ENCODE measurements at regions of chr1 and their contacts with region 1.

Region 1: DNA sequence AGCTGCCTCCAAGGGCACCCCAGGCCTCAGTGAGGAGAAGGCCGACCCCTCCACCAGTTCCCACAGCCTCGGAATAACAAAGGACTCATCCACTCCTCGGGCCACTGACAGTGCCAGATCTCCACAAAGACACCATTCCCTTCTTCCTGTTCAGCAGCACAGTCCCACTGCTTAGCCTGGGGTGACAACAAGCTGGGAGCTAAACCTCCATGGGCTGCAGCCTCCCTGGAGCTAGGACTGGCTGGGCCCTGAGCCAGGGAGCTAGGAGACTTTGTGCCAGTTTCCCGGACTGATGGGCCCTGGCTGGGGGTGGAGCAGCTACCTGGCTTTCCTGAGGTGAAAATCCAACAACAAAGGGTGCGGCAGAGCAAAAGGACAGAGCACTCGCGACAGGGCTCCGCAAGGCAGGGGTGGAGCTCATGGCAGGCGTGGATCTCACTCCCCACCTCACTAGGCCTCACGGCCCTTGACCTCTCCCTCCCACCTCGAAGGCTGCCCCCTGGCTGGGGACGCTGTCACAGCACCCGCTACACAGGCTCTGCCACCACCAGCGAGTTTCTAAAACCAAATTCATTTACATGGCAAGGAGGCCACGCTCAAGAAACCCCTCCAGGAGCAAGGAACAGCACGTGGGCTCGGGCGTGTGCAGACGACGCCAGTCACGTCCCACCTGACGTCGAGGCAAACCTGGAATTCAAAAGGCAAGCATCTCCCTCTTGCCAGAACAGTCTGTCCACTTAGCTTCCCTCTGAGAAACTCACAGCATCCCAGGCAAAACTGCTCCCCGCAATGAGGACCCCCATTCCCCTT is 13.8 kb downstream of the SLC35E2B start:
- DNase-seq: peak; percentile 89
- H3K4me3 ChIP-seq: peak overlapping the region; percentile 73
- H3K27ac ChIP-seq: peak overlapping the region; percentile 97
- H3K4me1 ChIP-seq: peaks cover 35% of the 10 kb centered on the region
- CTCF ChIP-seq: peak; percentile 89

Region 2: DNA sequence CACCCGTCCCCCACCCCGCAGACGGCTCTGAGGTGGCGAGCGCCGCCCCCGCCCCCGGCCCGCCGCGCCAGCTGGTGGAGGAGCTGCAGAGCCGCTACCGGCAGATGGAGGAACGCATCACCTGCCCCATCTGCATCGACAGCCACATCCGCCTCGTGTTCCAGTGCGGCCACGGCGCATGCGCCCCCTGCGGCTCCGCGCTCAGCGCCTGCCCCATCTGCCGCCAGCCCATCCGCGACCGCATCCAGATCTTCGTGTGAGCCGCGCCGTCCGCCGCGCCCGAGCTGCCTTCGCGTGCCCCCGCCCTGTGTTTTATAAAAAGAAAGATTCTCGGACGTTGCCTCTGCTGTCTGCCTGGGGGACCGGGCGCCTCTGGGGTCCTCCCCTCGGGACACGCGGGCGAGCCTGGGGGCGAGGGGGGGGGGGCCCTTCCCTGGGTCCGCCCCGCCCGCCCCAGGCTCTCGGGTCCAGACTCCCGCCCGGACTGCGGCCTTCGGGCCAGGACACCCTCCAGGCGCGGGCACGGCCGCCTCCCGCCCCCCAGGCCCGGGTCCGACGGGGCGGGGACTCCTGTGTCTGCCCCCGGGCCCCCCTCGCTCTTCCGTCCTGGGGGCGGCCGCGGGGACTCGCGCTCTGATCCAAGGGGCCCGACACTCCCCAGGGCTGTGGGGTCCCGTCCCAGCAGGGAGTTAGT is 48.4 kb before region 1 on chr1:
- CTCF ChIA-PET with region 1: interaction called, 10 read pairs
- POLR2A ChIA-PET with region 1: no interaction called
- intact Hi-C with region 1: no loop called
- DNase-seq: peak; percentile 96
- H3K4me3 ChIP-seq: peak overlapping the region; percentile 66
- H3K27ac ChIP-seq: peak overlapping the region; percentile 77
- H3K4me1 ChIP-seq: peaks cover 30% of the 10 kb centered on the region
- CTCF ChIP-seq: no peak

Measured in OCI-LY7 (cell line).